Naive thymus-derived CD4-positive, alpha-beta T cell (primary cell): ENCODE measurements at regions of chr13 and their contacts with region 1.

Region 1: GRCh38 chr13:100235311-100235901 is 146.5 kb downstream of the PCCA start:
- DNase-seq: peak in 7 of 9 donors; percentile 11 to 54 (median 40)
- ATAC-seq: peak; percentile 57
- H3K4me3 ChIP-seq: no peak overlapping the region
- H3K4me3 Mint-ChIP-seq: peak overlapping the region in 1 of 10 donors; percentile 30
- H3K27ac ChIP-seq: no peak overlapping the region
- H3K27ac Mint-ChIP-seq: no peak overlapping the region
- H3K4me1 ChIP-seq: peaks cover 0 to 5% of the 10 kb centered on the region in 2 donors
- H3K4me1 Mint-ChIP-seq: peaks cover 3 to 8% (median 5%) of the 10 kb centered on the region in 7 donors
- H3K27me3 ChIP-seq: no peaks in the 10 kb centered on the region
- H3K27me3 Mint-ChIP-seq: peaks cover 0 to 3% (median 0%) of the 10 kb centered on the region in 5 donors

Region 2: GRCh38 chr13:99442273-99442895 is 793.0 kb before region 1 on chr13:
- CTCF ChIA-PET with region 1: no interaction called
- POLR2A ChIA-PET with region 1: no interaction called
- intact Hi-C with region 1: loop called in 1 of 2 experiments (anchors 1 kb)
- DNase-seq: peak in 7 of 9 donors; percentile 50 to 75 (median 68)
- ATAC-seq: peak; percentile 95
- H3K4me3 ChIP-seq: no peak overlapping the region
- H3K4me3 Mint-ChIP-seq: no peak overlapping the region
- H3K27ac ChIP-seq: no peak overlapping the region
- H3K27ac Mint-ChIP-seq: peak overlapping the region in 1 of 9 donors; percentile 47
- H3K4me1 ChIP-seq: peaks cover 0 to 3% of the 10 kb centered on the region in 2 donors
- H3K4me1 Mint-ChIP-seq: peaks cover 2 to 17% (median 7%) of the 10 kb centered on the region in 7 donors
- H3K27me3 ChIP-seq: no peaks in the 10 kb centered on the region
- H3K27me3 Mint-ChIP-seq: peaks cover 0 to 30% (median 0%) of the 10 kb centered on the region in 5 donors

Region 3: GRCh38 chr13:99900960-99901359 is 334.4 kb before region 1 on chr13:
- CTCF ChIA-PET with region 1: interaction called, 3 read pairs
- POLR2A ChIA-PET with region 1: interaction called, 3 read pairs
- intact Hi-C with region 1: loop called in 1 of 2 experiments (anchors 1 kb)
- DNase-seq: no peak
- ATAC-seq: no peak
- H3K4me3 ChIP-seq: no peak overlapping the region
- H3K4me3 Mint-ChIP-seq: no peak overlapping the region
- H3K27ac ChIP-seq: no peak overlapping the region
- H3K27ac Mint-ChIP-seq: no peak overlapping the region
- H3K4me1 ChIP-seq: peaks cover 0 to 7% of the 10 kb centered on the region in 2 donors
- H3K4me1 Mint-ChIP-seq: peaks cover 0 to 9% (median 5%) of the 10 kb centered on the region in 7 donors
- H3K27me3 ChIP-seq: peaks cover 6 to 20% of the 10 kb centered on the region in 2 donors
- H3K27me3 Mint-ChIP-seq: peaks cover 52 to 71% (median 63%) of the 10 kb centered on the region in 5 donors

Region 4: GRCh38 chr13:99990126-99990977 is 245.1 kb before region 1 on chr13:
- CTCF ChIA-PET with region 1: no interaction called
- POLR2A ChIA-PET with region 1: no interaction called
- intact Hi-C with region 1: loop called in 1 of 2 experiments (anchors 5 kb)
- DNase-seq: peak in 1 of 9 donors; percentile 19
- ATAC-seq: no peak
- H3K4me3 ChIP-seq: no peak overlapping the region
- H3K4me3 Mint-ChIP-seq: peak overlapping the region in 9 of 10 donors; percentile 23 to 64 (median 49)
- H3K27ac ChIP-seq: no peak overlapping the region
- H3K27ac Mint-ChIP-seq: peak overlapping the region in 3 of 9 donors; percentile 25 to 46 (median 34)
- H3K4me1 ChIP-seq: peaks cover 6 to 25% of the 10 kb centered on the region in 2 donors
- H3K4me1 Mint-ChIP-seq: peaks cover 4 to 36% (median 25%) of the 10 kb centered on the region in 7 donors
- H3K27me3 ChIP-seq: peaks cover 45 to 96% of the 10 kb centered on the region in 2 donors
- H3K27me3 Mint-ChIP-seq: peaks cover 73 to 96% (median 94%) of the 10 kb centered on the region in 5 donors

Region 5: DNA sequence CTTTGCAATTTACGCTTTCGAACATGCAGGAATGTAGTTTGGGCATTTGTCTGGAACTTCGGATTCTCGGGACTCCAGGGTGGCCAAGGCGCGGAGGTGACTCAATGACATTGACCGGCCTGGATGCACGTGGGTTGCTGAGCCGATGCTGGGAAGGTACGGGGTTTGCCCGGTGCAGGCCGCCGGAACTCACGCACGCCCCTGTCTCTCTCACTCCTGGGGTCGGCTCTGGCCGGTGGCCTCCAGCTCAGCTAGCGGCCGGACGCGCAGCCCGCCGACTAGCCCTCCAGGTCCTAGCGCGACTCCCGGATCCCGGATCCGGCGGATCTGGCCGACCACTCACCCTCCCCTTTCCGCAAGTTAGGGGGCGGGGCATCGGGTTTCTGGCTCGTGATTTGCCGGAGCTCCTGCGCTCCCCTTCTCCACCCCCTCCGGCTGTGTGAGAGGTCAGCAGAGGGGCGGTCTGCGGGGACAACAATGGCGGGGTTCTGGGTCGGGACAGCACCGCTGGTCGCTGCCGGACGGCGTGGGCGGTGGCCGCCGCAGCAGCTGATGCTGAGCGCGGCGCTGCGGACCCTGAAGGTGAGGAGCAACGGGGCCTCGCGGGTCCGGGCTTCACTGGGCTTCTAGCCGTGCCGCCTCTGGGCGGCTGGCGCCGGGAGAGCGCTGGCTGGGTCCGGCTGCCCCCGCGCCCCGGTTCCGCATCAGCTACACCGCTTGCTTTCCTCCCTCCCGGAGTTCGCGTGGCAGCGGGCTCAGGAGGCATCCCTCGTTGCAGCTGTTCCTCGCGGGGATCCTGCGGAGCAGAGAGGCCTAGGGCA is 146.6 kb before region 1 on chr13 and contains the start of gene PCCA:
- CTCF ChIA-PET with region 1: interaction called, 3 read pairs
- POLR2A ChIA-PET with region 1: no interaction called
- intact Hi-C with region 1: loop called (anchors 5 to 10 kb)
- DNase-seq: peak; percentile 43 to 86 (median 51)
- ATAC-seq: peak; percentile 87
- H3K4me3 ChIP-seq: peak within 1 kb of the TSS; percentile 77
- H3K4me3 Mint-ChIP-seq: peak within 1 kb of the TSS; percentile 90 to 99 (median 95)
- H3K27ac ChIP-seq: peak within 1 kb of the TSS; percentile 58
- H3K27ac Mint-ChIP-seq: peak within 1 kb of the TSS; percentile 44 to 96 (median 79)
- H3K4me1 ChIP-seq: peaks cover 0 to 19% of the 10 kb centered on the region in 2 donors
- H3K4me1 Mint-ChIP-seq: peaks cover 22 to 41% (median 27%) of the 10 kb centered on the region in 7 donors
- H3K27me3 ChIP-seq: no peaks in the 10 kb centered on the region
- H3K27me3 Mint-ChIP-seq: peaks cover 0 to 5% (median 0%) of the 10 kb centered on the region in 5 donors
- total RNA-seq, gene PCCA: 8.3 to 14.6 (median 12.0) TPM

Region 6: GRCh38 chr13:100530671-100531213 is 295.3 kb after region 1 on chr13:
- CTCF ChIA-PET with region 1: no interaction called
- POLR2A ChIA-PET with region 1: no interaction called
- intact Hi-C with region 1: no loop called
- DNase-seq: no peak
- ATAC-seq: no peak
- H3K4me3 ChIP-seq: no peak overlapping the region
- H3K4me3 Mint-ChIP-seq: no peak overlapping the region
- H3K27ac ChIP-seq: no peak overlapping the region
- H3K27ac Mint-ChIP-seq: peak overlapping the region in 1 of 9 donors; percentile 29
- H3K4me1 ChIP-seq: no peaks in the 10 kb centered on the region
- H3K4me1 Mint-ChIP-seq: peaks cover 0 to 1% (median 0%) of the 10 kb centered on the region in 7 donors
- H3K27me3 ChIP-seq: no peaks in the 10 kb centered on the region
- H3K27me3 Mint-ChIP-seq: no peaks in the 10 kb centered on the region

Region 7: DNA sequence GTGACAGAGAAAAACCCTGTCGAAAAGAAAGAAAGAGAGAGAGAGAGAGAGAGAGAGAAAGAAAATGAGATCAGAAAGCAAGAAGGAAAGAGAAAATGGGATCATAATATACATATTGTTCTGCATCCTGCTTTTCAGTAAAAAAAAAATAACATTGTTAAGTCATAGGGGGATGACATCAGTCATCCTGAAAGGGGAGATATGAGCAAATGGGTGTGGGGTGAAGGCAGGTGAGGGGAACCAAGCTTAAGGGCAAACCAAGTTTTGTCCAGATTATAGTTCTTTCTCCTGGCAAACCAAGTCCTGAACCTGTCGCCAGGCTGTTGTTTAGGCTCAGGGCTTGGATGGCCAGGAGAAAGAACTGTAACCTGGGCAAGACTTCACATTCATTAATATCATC is 531.8 kb after region 1 on chr13:
- CTCF ChIA-PET with region 1: no interaction called
- POLR2A ChIA-PET with region 1: no interaction called
- intact Hi-C with region 1: no loop called
- DNase-seq: no peak
- ATAC-seq: no peak
- H3K4me3 ChIP-seq: no peak overlapping the region
- H3K4me3 Mint-ChIP-seq: no peak overlapping the region
- H3K27ac ChIP-seq: no peak overlapping the region
- H3K27ac Mint-ChIP-seq: no peak overlapping the region
- H3K4me1 ChIP-seq: no peaks in the 10 kb centered on the region
- H3K4me1 Mint-ChIP-seq: peaks cover 0 to 3% (median 0%) of the 10 kb centered on the region in 7 donors
- H3K27me3 ChIP-seq: no peaks in the 10 kb centered on the region
- H3K27me3 Mint-ChIP-seq: peaks cover 0 to 14% (median under 1%) of the 10 kb centered on the region in 5 donors